Tibial artery (tissue), 4 donors: ENCODE measurements at regions of chr1 and their contacts with region 1.

Region 1: GRCh38 chr1:16078925-16079656 is 5.6 kb upstream of the FAM131C start:
- DNase-seq: peak; percentile 74 to 87
- H3K4me3 ChIP-seq: no peak overlapping the region
- H3K27ac ChIP-seq: no peak overlapping the region
- H3K4me1 ChIP-seq: peaks cover 0 to 33% (median 22%) of the 10 kb centered on the region in 4 donors
- H3K27me3 ChIP-seq: no peaks in the 10 kb centered on the region
- CTCF ChIP-seq: peak; percentile 77 to 99

Region 2: GRCh38 chr1:15975805-15976680 is 103.0 kb before region 1 on chr1 and contains the start of gene ZBTB17:
- intact Hi-C with region 1: no loop called
- DNase-seq: peak; percentile 92 to 95
- H3K4me3 ChIP-seq: peak within 1 kb of the TSS; percentile 70 to 97
- H3K27ac ChIP-seq: peak within 1 kb of the TSS; percentile 71 to 83
- H3K4me1 ChIP-seq: peaks cover 0 to 29% (median 17%) of the 10 kb centered on the region in 4 donors
- H3K27me3 ChIP-seq: no peaks in the 10 kb centered on the region
- CTCF ChIP-seq: no peak

Region 3: DNA sequence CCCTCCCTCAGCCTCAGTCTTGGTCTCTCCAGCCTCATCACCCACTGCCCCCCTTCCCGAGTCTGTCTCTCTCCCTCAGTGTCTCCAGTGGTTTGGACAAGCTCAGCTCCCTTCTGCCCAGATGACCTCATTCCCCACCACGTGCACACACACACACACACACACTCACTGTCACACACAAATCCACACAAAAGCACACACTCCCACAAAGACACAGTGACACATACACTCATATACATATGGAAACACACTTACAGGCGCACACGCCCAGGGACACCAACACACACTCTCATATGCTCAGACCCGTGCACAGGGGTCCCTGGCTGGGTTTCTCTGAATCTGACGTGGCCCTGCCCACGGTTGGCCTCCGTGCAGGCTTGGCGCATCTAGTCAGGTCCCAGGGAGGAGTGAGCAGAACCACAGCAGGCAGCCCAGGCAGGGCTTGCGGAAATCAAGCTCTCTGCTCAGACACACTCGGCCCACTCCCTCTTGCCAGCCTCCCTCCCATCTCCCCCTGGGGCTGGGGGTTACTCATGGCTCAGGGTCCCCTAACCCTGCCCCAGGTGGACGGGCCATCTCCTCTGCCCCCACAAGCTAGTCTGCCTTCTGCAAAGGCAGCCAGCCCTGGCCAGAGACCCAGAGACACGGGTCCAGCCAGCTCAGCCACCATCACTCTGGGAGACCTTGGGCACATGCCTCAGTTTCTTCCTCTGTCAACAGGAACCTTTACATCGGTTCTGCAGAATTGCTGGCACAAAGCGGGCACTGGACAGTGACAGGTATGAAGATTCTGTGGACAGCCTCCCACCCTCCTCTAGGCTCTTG is 32.9 kb after region 1 on chr1:
- intact Hi-C with region 1: no loop called
- DNase-seq: peak in 1 of 2 donors; percentile 57
- H3K4me3 ChIP-seq: no peak overlapping the region
- H3K27ac ChIP-seq: peak overlapping the region in 1 of 2 donors; percentile 17
- H3K4me1 ChIP-seq: peaks cover 0 to 12% (median 0%) of the 10 kb centered on the region in 4 donors
- H3K27me3 ChIP-seq: no peaks in the 10 kb centered on the region
- CTCF ChIP-seq: no peak

Region 4: GRCh38 chr1:16143566-16144324 is 64.7 kb after region 1 on chr1:
- intact Hi-C with region 1: loop called (anchors 5 kb)
- DNase-seq: no peak
- H3K4me3 ChIP-seq: no peak overlapping the region
- H3K27ac ChIP-seq: peak overlapping the region; percentile 76
- H3K4me1 ChIP-seq: peaks cover 0 to 83% (median 64%) of the 10 kb centered on the region in 4 donors
- H3K27me3 ChIP-seq: no peaks in the 10 kb centered on the region
- CTCF ChIP-seq: no peak

Region 5: DNA sequence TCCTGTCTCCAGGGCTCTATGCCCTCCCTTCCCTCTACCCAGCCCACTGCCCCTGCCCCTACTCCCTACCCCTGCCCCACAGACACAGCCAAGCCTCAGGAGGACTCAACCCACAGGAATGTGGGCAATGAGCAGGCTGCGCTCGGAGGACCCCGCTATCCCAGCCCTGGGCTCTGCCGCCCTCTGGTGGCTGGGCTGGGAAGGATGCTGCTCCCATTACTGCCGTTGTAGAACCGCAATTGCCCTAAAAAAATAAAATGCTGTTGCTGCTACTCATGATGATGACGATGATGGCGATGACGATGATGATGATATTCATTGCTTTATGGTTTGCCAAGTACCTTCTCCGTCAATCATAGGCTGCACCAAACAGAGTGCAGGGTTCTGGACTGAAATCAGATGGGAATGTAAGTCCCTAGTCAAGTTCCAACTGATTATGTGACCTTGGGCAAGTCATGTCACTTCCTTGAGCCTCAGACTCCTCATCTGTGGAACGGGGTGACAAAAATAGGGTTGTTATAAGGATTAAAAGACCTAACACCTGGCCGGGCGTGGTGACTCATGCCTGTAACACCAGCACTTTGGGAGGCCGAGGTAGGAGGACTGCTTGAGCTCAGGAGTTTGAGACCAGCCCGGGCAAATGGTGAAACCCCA is 108.8 kb after region 1 on chr1:
- intact Hi-C with region 1: loop called (anchors 1 kb)
- DNase-seq: peak; percentile 71 to 86
- H3K4me3 ChIP-seq: no peak overlapping the region
- H3K27ac ChIP-seq: no peak overlapping the region
- H3K4me1 ChIP-seq: peaks cover 0 to 52% (median 7%) of the 10 kb centered on the region in 4 donors
- H3K27me3 ChIP-seq: peaks cover 0 to 13% of the 10 kb centered on the region in 2 donors
- CTCF ChIP-seq: peak; percentile 98 to 99

Region 6: DNA sequence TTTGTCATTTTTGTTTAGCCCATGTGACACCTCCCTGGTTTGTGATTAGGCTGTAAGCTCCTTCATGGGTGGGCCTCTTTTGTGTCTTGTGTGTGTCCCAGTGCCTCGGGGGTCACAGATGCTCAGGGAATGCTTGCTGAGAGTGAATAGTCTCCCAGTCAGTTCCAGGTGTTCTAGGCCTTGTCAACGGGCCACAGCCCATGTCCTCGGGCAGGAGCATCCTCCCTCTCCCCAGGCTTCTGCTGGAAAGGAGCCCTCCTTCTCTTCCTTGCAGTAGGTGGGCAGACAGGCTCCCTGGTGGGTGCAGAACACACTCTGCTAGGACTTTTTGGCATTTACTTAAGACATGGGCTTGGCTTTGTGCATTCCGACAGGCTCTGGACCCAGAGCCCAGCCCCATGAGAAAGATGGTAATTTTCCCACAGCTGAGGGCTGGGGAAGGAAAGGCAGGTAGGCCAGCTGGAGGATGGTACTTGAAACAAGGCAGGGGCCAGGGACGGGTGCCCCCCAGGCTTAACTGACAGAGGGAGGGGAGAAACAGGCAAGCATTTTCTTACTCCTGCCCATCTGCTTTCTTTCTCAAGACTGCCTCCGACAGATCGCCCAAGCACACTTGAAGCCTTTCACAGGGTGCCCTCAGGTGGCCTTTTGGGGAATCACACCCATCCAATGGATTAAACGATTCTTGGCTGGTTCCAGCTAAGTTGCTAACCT is 165.0 kb after region 1 on chr1:
- intact Hi-C with region 1: loop called (anchors 5 kb)
- DNase-seq: peak; percentile 83 to 90
- H3K4me3 ChIP-seq: no peak overlapping the region
- H3K27ac ChIP-seq: peak overlapping the region; percentile 77 to 83
- H3K4me1 ChIP-seq: peaks cover 0 to 59% (median 33%) of the 10 kb centered on the region in 4 donors
- H3K27me3 ChIP-seq: no peaks in the 10 kb centered on the region
- CTCF ChIP-seq: peak; percentile 85 to 87

Region 7: DNA sequence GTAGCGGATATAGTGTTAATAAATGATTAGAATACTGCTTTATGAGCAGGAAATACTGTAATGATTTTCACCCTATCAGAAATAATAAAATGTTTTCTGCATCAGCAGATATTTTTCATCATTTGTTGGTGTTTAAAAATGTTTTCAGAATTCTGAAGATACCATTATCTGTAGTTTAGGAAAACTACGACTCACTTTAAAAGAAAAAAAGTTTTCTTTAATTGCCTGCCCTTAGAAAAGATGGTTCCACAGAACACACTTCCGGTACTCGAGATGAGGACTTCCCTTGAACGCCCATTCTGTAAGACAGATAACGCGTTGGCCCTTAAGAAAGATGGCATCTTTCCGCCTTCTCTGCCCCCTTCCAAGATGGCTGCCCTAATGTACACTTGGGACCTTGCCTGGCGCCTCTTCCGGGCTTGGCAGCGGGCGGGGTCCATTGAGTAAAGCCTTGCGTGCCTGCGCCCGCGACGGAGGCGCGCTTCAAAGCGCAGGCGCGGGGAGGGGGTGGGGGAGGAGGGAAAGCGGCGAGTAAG is 287.7 kb after region 1 on chr1 and contains the start of gene SZRD1:
- intact Hi-C with region 1: loop called (anchors 10 kb)
- DNase-seq: peak; percentile 98
- H3K4me3 ChIP-seq: peak within 1 kb of the TSS; percentile 84 to 88
- H3K27ac ChIP-seq: peak within 1 kb of the TSS; percentile 95
- H3K4me1 ChIP-seq: peaks cover 0 to 72% (median 47%) of the 10 kb centered on the region in 4 donors
- H3K27me3 ChIP-seq: no peaks in the 10 kb centered on the region
- CTCF ChIP-seq: no peak

Region 8: DNA sequence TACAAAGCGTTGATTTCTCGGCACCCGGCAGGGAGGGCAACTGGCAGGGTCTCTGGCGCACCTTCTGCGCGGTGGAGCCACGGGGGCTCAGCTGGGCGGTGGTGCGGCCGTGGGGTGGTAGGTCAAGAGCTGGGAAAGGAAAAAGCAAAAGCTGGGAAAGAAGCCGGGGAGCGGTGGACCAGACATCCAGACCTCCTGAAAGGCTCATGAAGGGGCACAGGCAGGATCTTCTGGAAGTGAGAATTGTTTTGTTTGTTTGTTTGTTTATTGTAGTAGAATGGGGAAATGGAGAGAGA is 442.1 kb after region 1 on chr1:
- intact Hi-C with region 1: no loop called
- DNase-seq: no peak
- H3K4me3 ChIP-seq: no peak overlapping the region
- H3K27ac ChIP-seq: no peak overlapping the region
- H3K4me1 ChIP-seq: no peaks in the 10 kb centered on the region
- H3K27me3 ChIP-seq: peaks cover 0 to 27% of the 10 kb centered on the region in 2 donors
- CTCF ChIP-seq: no peak